Activated CD4-positive, alpha-beta T cell treated with anti-CD3 and anti-CD28 coated beads for 36 hours (primary cell): ENCODE measurements at regions of chr17 and their contacts with region 1.

Region 1: GRCh38 chr17:21551081-21551881 is 141.0 kb upstream of the KCNJ18 start:
- DNase-seq: peak; percentile 91
- ATAC-seq: peak; percentile 84
- H3K4me3 Mint-ChIP-seq: peak overlapping the region; percentile 72
- H3K27ac Mint-ChIP-seq: peak overlapping the region; percentile 85
- H3K4me1 Mint-ChIP-seq: peaks cover 30% of the 10 kb centered on the region
- H3K27me3 Mint-ChIP-seq: peaks cover 4% of the 10 kb centered on the region

Region 2: DNA sequence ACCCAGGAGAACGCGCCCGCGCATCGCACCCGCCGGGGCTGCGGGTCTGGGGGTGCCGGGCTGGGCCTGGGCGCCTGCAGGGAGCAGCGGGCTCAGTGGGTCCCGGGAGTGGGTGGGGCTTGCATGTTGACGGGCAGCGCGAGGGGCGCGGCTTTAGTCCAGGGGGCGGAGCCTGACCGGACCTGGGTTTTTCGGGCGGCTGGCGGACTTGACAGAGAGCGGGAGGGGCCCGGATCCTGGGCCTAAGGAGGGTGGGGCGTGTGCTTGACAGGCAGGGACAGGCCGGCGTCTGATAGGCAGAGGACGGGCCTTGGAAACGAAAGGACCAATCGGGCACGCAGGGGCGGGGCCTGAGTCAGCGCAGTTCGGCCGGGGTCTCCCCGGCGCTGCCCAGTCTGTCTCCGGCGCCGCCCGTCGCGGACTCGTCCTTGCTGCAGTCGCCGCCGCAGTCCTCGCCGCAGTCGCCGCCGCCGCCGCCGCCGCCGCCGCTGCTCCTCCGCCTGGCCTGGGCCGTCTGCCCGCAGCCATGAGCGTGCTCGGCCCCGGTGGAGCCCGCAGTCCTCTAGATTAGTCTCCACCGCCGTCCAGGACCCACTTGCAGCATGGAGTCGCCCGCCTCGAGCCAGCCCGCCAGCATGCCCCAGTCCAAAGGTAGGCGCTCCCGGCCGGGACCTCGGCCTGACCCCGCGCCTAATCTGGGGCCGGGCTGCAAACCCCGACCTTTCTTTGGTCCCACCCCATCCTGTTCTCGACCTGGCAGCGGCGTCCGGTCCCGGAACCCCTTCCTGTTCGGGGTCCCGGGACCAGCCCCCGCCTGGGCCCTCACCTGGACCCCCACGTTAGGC is 266.7 kb before region 1 on chr17 and contains the start of gene MAP2K3:
- CTCF ChIA-PET with region 1: interaction called, 3 read pairs
- POLR2A ChIA-PET with region 1: no interaction called
- intact Hi-C with region 1: loop called in 1 of 2 experiments (anchors 1 kb)
- DNase-seq: peak; percentile 99
- ATAC-seq: peak; percentile 76
- H3K4me3 Mint-ChIP-seq: peak within 1 kb of the TSS; percentile 98
- H3K27ac Mint-ChIP-seq: peak within 1 kb of the TSS; percentile 94
- H3K4me1 Mint-ChIP-seq: peaks cover 57% of the 10 kb centered on the region
- H3K27me3 Mint-ChIP-seq: no peaks in the 10 kb centered on the region
- total RNA-seq, gene MAP2K3: 122 to 123 TPM

Region 3: GRCh38 chr17:21318439-21318838 is 232.8 kb before region 1 on chr17:
- CTCF ChIA-PET with region 1: no interaction called
- POLR2A ChIA-PET with region 1: no interaction called
- intact Hi-C with region 1: loop called in 1 of 2 experiments (anchors 1 kb)
- DNase-seq: no peak
- ATAC-seq: no peak
- H3K4me3 Mint-ChIP-seq: no peak overlapping the region
- H3K27ac Mint-ChIP-seq: no peak overlapping the region
- H3K4me1 Mint-ChIP-seq: peaks cover 7% of the 10 kb centered on the region
- H3K27me3 Mint-ChIP-seq: no peaks in the 10 kb centered on the region

Region 4: DNA sequence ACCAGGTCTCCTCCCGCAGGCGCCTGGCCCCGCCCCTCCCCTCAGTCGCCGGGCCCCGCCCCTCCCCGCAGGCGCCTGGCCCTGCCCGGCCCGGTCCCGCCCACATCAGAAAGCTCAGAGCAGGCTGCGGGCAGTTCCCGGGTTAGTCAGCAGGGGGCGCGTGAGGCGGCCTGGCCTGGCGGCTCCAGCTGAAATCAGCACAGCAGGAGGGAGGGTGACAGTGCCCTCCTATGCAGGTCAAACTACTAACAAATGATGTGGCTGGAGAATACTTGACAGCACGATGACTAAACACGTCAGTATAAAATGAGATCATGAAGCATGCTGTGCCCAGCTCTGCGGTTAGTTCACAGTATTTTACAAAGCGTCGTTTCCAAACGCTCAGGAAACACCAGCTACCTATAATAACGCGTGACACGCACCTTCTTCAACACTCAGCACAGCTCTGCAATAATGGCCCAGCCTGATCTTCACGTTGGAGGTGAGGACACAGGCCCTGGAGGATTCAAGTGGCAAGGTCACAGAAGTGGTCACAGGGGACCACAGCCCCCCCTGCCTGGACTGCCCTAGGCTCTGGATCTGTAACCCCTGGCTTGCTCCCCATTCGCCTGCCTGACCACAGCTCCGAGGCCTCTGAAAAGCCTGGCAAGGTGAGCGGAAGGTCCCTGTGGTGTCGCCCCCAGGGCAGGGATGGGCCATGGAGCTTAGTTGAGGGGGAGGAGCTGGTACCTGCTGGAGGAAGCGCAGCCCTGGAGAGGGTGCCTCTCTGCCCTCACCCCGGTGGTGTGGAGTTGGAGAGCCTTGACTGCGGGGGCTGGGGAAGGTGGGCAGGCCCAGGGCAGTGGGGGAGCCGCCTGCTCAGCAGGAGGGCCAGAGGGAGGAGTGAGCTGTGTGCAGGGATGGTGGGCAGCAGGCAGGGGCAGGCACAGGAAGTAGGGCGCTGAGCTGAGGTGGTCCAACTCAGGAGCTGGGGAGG is 93.9 kb before region 1 on chr17:
- CTCF ChIA-PET with region 1: interaction called, 7 read pairs
- POLR2A ChIA-PET with region 1: interaction called, 3 read pairs
- intact Hi-C with region 1: loop called in 1 of 2 experiments (anchors 1 kb)
- DNase-seq: peak; percentile 96
- ATAC-seq: peak; percentile 92
- H3K4me3 Mint-ChIP-seq: no peak overlapping the region
- H3K27ac Mint-ChIP-seq: peak overlapping the region; percentile 67
- H3K4me1 Mint-ChIP-seq: peaks cover 21% of the 10 kb centered on the region
- H3K27me3 Mint-ChIP-seq: peaks cover 15% of the 10 kb centered on the region

Region 5: DNA sequence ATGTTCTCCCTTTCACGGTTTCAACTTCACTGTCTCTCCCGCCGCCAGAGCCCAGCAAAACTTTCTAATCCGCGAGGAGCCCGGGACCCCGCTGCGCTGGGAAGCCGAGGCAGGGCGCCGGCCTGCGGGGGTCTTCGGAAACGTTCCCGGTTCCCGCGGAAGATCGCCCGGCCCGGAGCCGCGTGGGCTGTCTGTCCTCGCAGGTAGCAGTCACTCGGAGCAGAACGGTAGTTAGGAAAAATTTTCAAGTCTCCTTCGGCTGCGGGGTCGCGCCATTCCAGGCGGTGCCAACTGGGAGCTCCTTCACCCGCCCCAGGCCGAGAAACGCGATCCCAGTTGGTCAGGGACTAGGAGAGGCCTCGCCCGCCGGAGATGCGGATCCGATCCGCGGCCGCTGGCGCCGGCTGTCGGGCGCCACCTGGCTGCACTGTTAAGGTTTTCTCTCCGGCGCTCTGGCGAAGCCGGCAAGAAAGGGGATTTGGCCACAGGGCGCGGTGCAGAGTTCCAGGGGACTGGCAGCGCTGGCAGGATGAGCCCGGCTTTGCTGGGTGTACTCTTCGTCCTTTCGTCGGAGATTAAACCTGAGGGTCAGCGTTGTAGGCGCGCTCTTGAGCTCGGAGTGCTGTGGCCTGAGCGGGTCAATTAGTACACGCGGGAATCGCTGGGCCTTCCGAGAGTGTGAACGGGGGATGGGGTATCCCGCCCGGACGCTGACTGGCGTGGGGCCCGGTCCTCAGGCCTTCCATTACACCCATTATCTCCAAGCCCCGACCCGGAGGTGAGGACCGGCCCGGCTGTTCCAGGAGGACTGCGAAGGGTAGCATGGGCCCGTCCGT is 39.7 kb before region 1 on chr17:
- CTCF ChIA-PET with region 1: interaction called, 4 read pairs
- POLR2A ChIA-PET with region 1: no interaction called
- intact Hi-C with region 1: loop called in 1 of 2 experiments (anchors 2 kb)
- DNase-seq: peak; percentile 82
- ATAC-seq: peak; percentile 87
- H3K4me3 Mint-ChIP-seq: peak overlapping the region; percentile 60
- H3K27ac Mint-ChIP-seq: no peak overlapping the region
- H3K4me1 Mint-ChIP-seq: peaks cover 14% of the 10 kb centered on the region
- H3K27me3 Mint-ChIP-seq: peaks cover 31% of the 10 kb centered on the region

Region 6: DNA sequence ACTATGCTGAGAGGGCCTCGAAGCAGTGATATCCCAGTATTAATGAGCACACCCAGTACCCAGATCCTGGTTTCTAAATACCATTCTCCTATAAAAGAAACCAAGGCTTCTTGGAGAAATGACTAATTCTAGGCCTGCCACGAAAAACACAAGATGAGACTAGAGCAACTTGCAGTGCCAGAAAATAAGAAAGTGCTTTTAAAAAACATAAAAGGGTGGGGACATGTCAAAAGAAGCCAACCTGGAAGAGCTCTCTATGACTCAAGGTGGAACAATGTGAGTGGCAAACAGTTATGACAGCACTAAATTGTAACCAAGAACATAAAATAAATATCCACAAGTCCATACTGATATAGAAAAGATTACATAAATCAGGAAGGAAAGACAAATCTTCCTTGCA is 12.1 kb before region 1 on chr17:
- CTCF ChIA-PET with region 1: interaction called, 4 read pairs
- POLR2A ChIA-PET with region 1: no interaction called
- intact Hi-C with region 1: loop called (anchors 1 kb)
- DNase-seq: no peak
- ATAC-seq: peak; percentile 76
- H3K4me3 Mint-ChIP-seq: no peak overlapping the region
- H3K27ac Mint-ChIP-seq: no peak overlapping the region
- H3K4me1 Mint-ChIP-seq: peaks cover 16% of the 10 kb centered on the region
- H3K27me3 Mint-ChIP-seq: no peaks in the 10 kb centered on the region

Region 7: GRCh38 chr17:21573961-21574610 is 22.8 kb after region 1 on chr17:
- CTCF ChIA-PET with region 1: interaction called, 3 read pairs
- POLR2A ChIA-PET with region 1: no interaction called
- intact Hi-C with region 1: loop called in 1 of 2 experiments (anchors 1 kb)
- DNase-seq: peak; percentile 84
- ATAC-seq: peak; percentile 90
- H3K4me3 Mint-ChIP-seq: peak overlapping the region; percentile 70
- H3K27ac Mint-ChIP-seq: peak overlapping the region; percentile 2
- H3K4me1 Mint-ChIP-seq: peaks cover 10% of the 10 kb centered on the region
- H3K27me3 Mint-ChIP-seq: peaks cover 3% of the 10 kb centered on the region